Activated CD4-positive, alpha-beta memory T cell treated with anti-CD3 and anti-CD28 coated beads for 36 hours (primary cell): ENCODE measurements at regions of chr3 and their contacts with region 1.

Region 1: DNA sequence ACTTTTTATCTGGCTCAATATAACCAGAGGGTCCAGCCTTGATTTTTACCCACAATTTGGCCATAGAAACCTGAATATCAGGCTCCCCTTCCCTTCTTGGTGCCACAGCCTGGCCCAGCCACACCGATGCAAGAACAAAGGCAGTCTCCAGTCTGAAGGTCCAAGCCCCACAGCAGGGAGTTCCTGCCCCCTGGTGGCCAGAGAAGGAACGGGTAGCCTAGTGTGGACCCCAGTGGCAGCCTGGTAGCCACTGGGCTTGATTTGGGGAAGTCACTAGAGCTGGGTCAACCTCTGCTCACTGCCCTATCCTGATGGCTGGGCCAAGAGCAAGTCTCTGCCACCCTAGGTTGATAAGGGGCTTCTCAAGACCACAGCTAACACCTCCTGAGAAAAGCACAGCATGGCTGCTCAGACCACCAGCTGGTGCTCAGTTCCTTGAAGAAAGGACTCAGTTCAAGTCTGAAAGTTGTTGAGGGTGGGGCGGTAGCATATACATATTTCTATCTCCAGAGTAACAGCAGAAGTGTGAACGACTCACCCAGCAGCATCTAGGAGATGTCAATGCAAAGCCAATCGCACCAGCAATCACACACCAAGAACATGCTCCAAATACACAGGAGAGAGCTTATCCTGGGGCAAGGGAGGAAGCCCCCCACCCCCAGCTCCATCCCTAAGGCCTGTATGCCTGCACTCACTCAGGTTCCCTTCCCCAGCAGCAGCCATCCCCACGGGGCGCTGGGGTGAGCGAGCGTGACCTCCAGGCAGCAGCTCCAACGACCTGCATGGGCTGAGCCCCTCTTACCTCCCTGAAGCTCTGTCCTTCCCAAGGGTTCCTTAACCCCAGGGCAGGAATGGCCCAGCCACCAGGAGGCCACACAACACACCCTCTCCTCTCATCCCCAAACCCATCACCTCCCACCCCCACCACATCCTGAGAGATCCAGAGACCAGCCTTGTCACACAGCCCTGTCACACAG is 7.6 kb downstream of the PFKFB4 start:
- DNase-seq: peak; percentile 90
- H3K4me3 Mint-ChIP-seq: no peak overlapping the region
- H3K27ac Mint-ChIP-seq: no peak overlapping the region
- H3K4me1 Mint-ChIP-seq: peaks cover 7% of the 10 kb centered on the region
- H3K27me3 Mint-ChIP-seq: no peaks in the 10 kb centered on the region

Region 2: GRCh38 chr3:48232734-48233133 is 316.3 kb before region 1 on chr3:
- CTCF ChIA-PET with region 1: interaction called, 5 read pairs
- POLR2A ChIA-PET with region 1: no interaction called
- intact Hi-C with region 1: loop called (anchors 1 kb)
- DNase-seq: peak; percentile 77
- H3K4me3 Mint-ChIP-seq: no peak overlapping the region
- H3K27ac Mint-ChIP-seq: no peak overlapping the region
- H3K4me1 Mint-ChIP-seq: peaks cover 2% of the 10 kb centered on the region
- H3K27me3 Mint-ChIP-seq: peaks cover 3% of the 10 kb centered on the region

Region 3: DNA sequence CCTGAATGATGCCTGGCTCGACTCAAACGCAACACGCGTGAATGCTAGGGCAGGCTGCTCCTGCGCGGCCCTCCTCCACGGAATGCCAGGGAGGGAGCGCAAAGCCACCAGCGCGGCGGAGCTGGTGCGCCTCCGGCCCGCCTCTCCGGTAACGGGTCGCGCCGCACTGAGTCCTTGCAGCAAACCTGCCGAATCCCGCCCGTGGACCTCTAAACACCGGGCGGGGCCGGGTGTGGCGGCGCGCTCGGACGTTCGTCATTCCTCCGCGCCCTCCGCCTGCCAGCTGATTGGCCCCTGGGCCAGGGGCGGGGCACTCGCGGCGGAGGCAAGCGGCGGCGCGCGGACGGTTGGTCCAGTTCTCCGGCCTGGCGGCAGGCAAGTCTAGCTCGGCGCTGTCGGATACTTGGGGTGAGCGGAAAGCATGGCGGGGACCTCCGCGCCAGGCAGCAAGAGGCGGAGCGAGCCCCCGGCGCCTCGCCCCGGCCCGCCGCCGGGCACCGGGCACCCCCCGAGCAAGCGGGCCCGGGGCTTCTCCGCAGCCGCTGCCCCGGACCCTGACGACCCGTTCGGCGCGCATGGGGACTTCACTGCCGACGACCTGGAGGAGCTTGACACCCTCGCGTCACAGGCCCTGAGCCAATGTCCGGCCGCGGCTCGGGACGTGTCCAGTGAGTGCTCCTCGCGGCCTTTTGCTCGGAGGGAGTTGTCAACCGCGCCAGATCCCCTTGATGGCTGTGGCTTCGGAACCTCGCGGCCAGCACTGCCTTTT is 102.4 kb before region 1 on chr3 and contains the start of gene ATRIP:
- CTCF ChIA-PET with region 1: interaction called, 11 read pairs
- POLR2A ChIA-PET with region 1: interaction called, 3 read pairs
- intact Hi-C with region 1: no loop called
- DNase-seq: peak; percentile 91
- H3K4me3 Mint-ChIP-seq: peak within 1 kb of the TSS; percentile 90
- H3K27ac Mint-ChIP-seq: peak within 1 kb of the TSS; percentile 64
- H3K4me1 Mint-ChIP-seq: peaks cover 43% of the 10 kb centered on the region
- H3K27me3 Mint-ChIP-seq: no peaks in the 10 kb centered on the region
- total RNA-seq, gene ATRIP: 13.8 to 14.5 TPM

Region 4: DNA sequence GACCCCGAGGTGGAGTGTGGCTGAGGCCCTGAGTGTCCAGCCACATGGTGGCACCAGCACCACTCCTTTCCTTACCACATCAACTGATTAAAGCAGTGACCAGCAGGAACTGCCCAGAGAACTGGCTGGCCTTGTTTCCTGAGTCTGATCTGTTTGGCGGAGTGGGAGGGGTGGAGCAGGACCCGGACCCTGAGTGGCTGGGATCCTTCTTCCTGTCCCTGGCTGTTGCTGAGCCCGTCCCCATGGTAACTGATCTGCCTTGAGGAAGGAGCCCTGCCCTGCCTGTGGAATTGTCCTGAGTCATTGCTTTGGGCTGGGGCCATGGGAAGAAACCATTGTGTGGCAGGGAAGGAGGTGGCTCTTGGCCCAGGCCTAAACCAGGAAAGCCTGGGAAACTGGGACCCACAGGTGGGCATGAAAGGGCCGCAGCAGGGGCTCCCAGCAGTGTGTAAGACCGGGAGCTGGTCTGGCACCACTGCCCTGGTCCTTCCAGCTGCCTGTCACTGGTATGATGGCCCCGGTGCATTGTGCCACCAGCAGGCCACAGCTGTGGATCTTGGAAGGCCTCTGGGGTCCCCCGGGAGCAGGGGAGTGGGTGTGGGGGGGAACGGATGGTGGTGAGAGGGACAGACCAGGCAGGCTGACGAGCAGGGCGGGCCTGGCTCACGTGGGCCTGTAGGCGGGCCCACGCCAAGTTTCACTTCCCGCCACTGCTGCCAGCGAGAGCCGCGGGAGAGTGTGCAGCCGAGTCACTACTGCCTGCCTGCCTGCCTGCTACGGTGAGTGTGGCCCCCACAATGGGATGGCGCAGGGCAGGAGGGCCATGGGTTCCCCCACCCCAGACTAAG is 83.3 kb before region 1 on chr3:
- CTCF ChIA-PET with region 1: interaction called, 10 read pairs
- POLR2A ChIA-PET with region 1: no interaction called
- intact Hi-C with region 1: no loop called
- DNase-seq: peak; percentile 90
- H3K4me3 Mint-ChIP-seq: peak overlapping the region; percentile 97
- H3K27ac Mint-ChIP-seq: peak overlapping the region; percentile 95
- H3K4me1 Mint-ChIP-seq: peaks cover 46% of the 10 kb centered on the region
- H3K27me3 Mint-ChIP-seq: no peaks in the 10 kb centered on the region

Region 5: DNA sequence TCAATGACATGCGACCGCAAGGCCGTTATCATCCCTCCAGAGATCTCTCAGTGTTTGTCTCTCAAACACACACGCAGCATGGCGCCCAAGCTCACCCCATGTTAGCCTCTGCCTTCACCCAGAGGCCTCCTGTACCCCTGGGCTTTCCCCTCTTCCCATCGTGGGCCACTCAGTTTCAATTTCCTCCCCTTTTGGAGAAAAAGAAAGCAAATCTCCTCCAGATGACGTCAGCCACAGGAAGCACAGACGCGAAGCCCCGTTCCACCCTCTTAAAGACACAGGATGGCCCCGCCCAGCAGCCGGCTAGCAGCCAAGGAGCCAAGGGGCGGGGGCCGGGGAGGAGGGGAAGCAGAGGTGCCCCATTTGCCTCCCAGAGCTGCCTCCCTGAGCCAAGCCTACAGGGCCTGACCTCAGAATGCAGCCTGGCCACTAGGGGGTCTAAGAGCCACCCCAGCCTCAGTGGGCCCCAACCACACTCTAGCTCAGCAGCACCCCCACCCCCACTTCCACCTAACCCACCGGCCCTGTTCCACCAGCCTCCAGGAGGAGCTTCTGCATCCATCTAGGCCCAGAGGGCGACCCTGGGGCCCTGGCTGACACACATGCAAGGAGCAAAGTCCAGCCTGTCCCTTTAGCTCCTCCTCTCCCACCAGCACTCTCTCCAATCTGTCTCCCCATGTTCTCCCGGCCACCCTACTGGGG is 76.0 kb before region 1 on chr3:
- CTCF ChIA-PET with region 1: interaction called, 24 read pairs
- POLR2A ChIA-PET with region 1: no interaction called
- intact Hi-C with region 1: no loop called
- DNase-seq: peak; percentile 98
- H3K4me3 Mint-ChIP-seq: peak overlapping the region; percentile 79
- H3K27ac Mint-ChIP-seq: peak overlapping the region; percentile 98
- H3K4me1 Mint-ChIP-seq: peaks cover 50% of the 10 kb centered on the region
- H3K27me3 Mint-ChIP-seq: no peaks in the 10 kb centered on the region

Region 6: GRCh38 chr3:48507351-48508061 is 41.5 kb before region 1 on chr3:
- CTCF ChIA-PET with region 1: interaction called, 7 read pairs
- POLR2A ChIA-PET with region 1: interaction called, 3 read pairs
- intact Hi-C with region 1: loop called (anchors 2 kb)
- DNase-seq: peak; percentile 84
- H3K4me3 Mint-ChIP-seq: no peak overlapping the region
- H3K27ac Mint-ChIP-seq: peak overlapping the region; percentile 74
- H3K4me1 Mint-ChIP-seq: peaks cover 42% of the 10 kb centered on the region
- H3K27me3 Mint-ChIP-seq: no peaks in the 10 kb centered on the region

Region 7: GRCh38 chr3:48528754-48529153 is 20.3 kb before region 1 on chr3:
- CTCF ChIA-PET with region 1: interaction called, 10 read pairs
- POLR2A ChIA-PET with region 1: interaction called, 4 read pairs
- intact Hi-C with region 1: no loop called
- DNase-seq: no peak
- H3K4me3 Mint-ChIP-seq: no peak overlapping the region
- H3K27ac Mint-ChIP-seq: no peak overlapping the region
- H3K4me1 Mint-ChIP-seq: no peaks in the 10 kb centered on the region
- H3K27me3 Mint-ChIP-seq: no peaks in the 10 kb centered on the region

Region 8: GRCh38 chr3:48845170-48845569 is 296.2 kb after region 1 on chr3:
- CTCF ChIA-PET with region 1: no interaction called
- POLR2A ChIA-PET with region 1: no interaction called
- intact Hi-C with region 1: no loop called
- DNase-seq: no peak
- H3K4me3 Mint-ChIP-seq: no peak overlapping the region
- H3K27ac Mint-ChIP-seq: no peak overlapping the region
- H3K4me1 Mint-ChIP-seq: peaks cover 33% of the 10 kb centered on the region
- H3K27me3 Mint-ChIP-seq: no peaks in the 10 kb centered on the region